ENCODE measurements at regions of chr16 and their contacts with region 1.

Region 1: GRCh38 chr16:68264128-68265077 is at the start of gene SLC7A6:
- DNase-seq: peak; percentile 85
- H3K4me3 Mint-ChIP-seq: peak within 1 kb of the TSS; percentile 94
- H3K27ac Mint-ChIP-seq: peak within 1 kb of the TSS; percentile 99
- H3K4me1 Mint-ChIP-seq: peaks cover 54% of the 10 kb centered on the region
- H3K27me3 Mint-ChIP-seq: no peaks in the 10 kb centered on the region
- total RNA-seq, gene SLC7A6: 139 and 143 TPM in 2 replicates

Region 2: DNA sequence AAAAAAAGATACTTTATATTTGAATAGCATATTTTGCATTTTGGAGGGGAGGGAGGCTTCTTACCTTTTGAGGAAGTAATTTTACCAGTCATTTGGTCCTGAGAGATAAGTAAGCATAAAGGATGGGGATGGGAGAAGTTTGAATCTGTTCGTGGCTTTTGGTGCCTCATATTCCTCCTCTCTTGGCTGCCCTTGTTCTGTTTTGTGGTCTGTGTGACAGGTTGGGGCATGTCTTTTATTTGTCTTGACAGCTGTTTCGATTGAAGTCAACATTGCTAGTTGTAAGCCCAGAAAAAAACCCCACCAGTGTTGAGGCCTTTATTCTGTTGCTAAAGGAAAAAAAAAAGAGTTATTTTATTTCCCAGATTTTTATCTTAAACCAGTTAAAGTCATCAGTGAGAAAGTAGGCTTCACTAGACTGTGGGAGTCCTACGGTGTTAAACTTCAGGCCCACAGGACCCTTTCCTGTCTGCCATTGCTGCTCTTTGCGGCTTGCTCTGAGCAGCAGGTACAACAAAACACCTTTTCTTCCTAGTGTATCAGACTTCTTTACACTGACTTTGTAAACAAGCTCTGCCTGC is 11.3 kb after region 1 on chr16:
- intact Hi-C with region 1: loop called (anchors 1 kb)
- DNase-seq: peak; percentile 40
- H3K4me3 Mint-ChIP-seq: peak overlapping the region; percentile 65
- H3K27ac Mint-ChIP-seq: peak overlapping the region; percentile 90
- H3K4me1 Mint-ChIP-seq: peaks cover 63% of the 10 kb centered on the region
- H3K27me3 Mint-ChIP-seq: no peaks in the 10 kb centered on the region

Region 3: DNA sequence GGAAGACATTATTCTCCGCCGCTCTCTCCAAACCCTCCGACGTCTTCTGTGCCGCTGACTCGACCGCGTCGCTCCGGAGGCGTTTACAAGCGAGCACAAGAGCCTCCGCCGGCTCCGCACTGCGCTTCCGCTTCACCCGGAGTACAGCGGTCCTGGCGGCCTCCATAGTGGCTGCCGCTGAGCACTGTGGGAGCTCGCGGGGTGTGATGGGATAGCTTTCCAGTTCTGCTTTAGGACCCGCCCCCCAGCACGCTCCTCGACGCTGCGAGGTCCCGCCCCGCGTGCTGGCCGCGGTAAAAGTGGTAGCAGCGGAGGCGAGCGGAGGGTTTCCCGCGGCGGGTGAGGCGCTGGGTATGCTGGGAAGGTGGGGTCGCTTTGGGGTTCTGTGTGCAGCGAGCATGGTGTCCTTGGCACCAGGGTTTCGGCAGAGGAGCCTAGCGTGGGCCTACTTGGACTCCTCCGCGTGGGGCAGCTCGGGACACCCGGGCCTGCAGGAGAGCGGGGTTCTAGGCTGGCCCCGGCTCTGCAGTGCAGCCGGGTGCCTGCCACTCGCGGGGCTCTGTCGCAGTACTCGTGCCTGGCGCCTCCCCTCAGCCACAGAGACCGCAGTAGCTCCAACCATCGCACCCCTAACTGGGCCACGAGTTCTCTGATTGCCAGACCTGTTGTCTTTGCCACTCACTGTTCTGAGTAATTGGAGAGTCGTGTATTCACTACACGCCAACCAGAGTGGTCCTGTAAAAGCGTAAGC is 46.5 kb after region 1 on chr16 and contains the starts of genes PRMT7 and SLC7A6OS:
- intact Hi-C with region 1: loop called (anchors 1 kb)
- DNase-seq: peak; percentile 92
- H3K4me3 Mint-ChIP-seq: peak within 1 kb of the TSS; percentile 99
- H3K27ac Mint-ChIP-seq: peak within 1 kb of the TSS; percentile 98
- H3K4me1 Mint-ChIP-seq: peaks cover 43% of the 10 kb centered on the region
- H3K27me3 Mint-ChIP-seq: no peaks in the 10 kb centered on the region
- total RNA-seq, gene PRMT7: 80.6 and 85.2 TPM in 2 replicates
- total RNA-seq, gene SLC7A6OS: 26.5 and 27.6 TPM in 2 replicates

Region 4: GRCh38 chr16:68328151-68328859 is 63.9 kb after region 1 on chr16:
- intact Hi-C with region 1: loop called (anchors 1 kb)
- DNase-seq: peak; percentile 73
- H3K4me3 Mint-ChIP-seq: no peak overlapping the region
- H3K27ac Mint-ChIP-seq: no peak overlapping the region
- H3K4me1 Mint-ChIP-seq: peaks cover 41% of the 10 kb centered on the region
- H3K27me3 Mint-ChIP-seq: no peaks in the 10 kb centered on the region

Region 5: GRCh38 chr16:68503334-68503733 is 238.9 kb after region 1 on chr16:
- intact Hi-C with region 1: no loop called
- DNase-seq: no peak
- H3K4me3 Mint-ChIP-seq: no peak overlapping the region
- H3K27ac Mint-ChIP-seq: no peak overlapping the region
- H3K4me1 Mint-ChIP-seq: no peaks in the 10 kb centered on the region
- H3K27me3 Mint-ChIP-seq: peaks cover 27% of the 10 kb centered on the region

Region 6: DNA sequence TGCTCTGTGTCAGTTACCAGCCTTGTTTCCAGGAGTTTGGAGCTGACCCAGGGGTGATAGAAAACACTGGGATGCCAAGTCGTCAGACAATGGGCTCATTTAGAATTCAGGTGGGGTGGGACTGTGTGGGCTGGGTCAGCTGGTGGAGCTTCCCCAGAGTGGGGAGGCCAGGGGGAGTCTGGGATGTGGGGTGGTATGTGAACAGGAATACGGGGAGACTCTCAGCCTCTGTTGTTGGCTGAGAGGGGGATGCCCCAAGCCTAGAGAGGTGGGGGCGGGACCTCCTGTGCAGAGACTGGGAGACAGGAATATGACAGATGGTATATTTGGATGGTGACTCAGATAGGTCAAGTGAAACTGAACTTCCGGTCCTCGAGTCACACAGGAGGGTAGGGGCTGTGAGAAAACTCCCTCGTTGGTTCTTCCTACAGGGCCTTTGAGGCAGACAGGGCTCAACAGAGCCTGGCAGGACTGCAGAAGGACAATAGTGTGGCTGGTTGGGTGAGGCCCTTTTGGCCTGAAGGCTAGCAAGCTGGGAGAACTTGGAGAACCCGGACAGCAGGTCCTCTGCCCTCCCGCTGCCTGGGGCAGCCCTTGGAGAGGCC is 496.4 kb after region 1 on chr16:
- intact Hi-C with region 1: loop called (anchors 10 kb)
- DNase-seq: peak; percentile 37
- H3K4me3 Mint-ChIP-seq: peak overlapping the region; percentile 8
- H3K27ac Mint-ChIP-seq: peak overlapping the region; percentile 72
- H3K4me1 Mint-ChIP-seq: peaks cover 73% of the 10 kb centered on the region
- H3K27me3 Mint-ChIP-seq: no peaks in the 10 kb centered on the region